Prostate gland (tissue), 2 donors: ENCODE measurements at regions of chr10 and their contacts with region 1.

Region 1: GRCh38 chr10:97612386-97612785 is 20.9 kb downstream of the MORN4 start:
- DNase-seq: peak; percentile 13
- H3K4me3 ChIP-seq: no peak overlapping the region
- H3K27ac ChIP-seq: no peak overlapping the region
- H3K4me1 ChIP-seq: no peaks in the 10 kb centered on the region
- H3K27me3 ChIP-seq: no peaks in the 10 kb centered on the region
- CTCF ChIP-seq: peak in 3 of 4 experiments; percentile 33 to 68 (median 65)
- POLR2A ChIP-seq: no peak

Region 2: DNA sequence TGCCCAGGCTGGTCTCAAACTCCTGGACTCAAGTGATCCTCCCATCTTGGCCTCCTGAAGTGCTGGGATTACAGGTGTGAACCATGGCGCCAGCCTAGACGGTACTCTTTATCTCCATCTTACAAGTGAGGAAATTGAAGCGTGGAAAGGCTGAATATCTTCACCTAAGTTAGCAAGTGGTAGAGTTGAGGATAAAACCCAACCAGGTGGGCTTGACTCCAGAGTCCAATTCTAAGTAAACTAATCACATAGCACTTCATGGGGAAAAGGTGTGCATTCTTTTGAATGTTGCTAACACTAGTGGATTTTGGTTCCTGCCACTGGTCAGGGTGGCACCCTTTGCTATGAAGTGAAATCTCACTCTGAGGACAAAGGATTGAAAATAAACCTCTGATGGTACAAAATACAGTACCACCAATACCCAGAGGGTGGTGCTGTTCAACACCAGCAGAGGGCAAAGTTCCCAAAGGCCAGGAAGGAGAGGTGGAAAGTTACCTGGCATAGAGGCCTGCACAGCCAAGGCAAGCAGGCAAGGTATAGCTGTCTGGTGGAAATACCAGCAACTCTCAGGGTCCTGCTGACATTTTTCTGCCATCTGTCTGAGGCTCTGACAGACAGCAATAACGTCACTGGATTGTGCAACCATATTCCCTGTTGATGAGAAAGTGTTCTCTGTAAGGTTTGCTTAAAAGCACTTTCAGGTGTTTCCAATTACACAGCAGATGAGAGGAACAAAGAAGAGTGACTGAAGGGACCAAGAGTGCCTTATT is 148.8 kb before region 1 on chr10:
- intact Hi-C with region 1: loop called (anchors 5 kb)
- DNase-seq: peak; percentile 55
- H3K4me3 ChIP-seq: no peak overlapping the region
- H3K27ac ChIP-seq: peak overlapping the region in 1 of 2 donors; percentile 9
- H3K4me1 ChIP-seq: peaks cover 4% of the 10 kb centered on the region
- H3K27me3 ChIP-seq: no peaks in the 10 kb centered on the region
- CTCF ChIP-seq: peak; percentile 68 to 90 (median 82)
- POLR2A ChIP-seq: no peak

Region 3: DNA sequence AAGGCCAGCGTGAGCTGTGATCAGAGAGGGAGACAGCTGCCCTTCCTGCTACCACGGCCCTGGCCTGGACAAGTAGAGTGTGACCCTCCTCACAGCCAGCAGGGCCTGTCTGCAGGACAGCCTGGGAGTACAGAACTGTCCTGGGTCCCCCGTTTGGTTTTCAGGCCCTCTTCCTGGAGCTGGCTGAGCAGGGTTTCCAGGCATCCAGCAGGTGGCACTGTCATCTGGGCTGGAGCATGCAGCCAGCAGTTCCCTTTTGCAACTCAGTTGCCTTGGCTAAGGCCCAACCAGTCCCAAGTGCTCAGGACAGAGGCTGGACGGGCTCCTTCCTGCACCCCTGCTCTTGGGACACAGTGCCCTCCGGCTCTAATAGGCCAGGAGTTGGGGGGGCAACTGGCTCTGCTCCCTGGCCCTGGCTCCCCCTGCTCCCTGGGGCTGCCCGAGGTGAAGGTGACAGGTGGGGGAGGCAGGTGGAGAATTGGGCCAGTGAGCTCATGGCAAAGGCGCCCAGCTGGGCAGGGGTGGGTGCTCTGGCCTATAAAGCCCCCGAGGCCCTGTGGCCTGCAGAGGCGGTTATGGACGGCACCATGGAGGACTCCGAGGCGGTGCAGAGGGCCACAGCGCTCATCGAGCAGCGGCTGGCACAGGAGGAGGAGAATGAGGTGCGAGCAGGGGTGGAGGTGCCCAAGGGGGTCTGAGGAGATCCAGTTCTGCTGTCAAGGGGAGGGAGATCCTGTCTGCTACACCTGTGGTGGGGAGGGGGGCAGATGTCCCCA is 40.0 kb before region 1 on chr10 and contains the start of gene ANKRD2:
- intact Hi-C with region 1: loop called (anchors 2 kb)
- DNase-seq: peak; percentile 74
- H3K4me3 ChIP-seq: no peak within 1 kb of the TSS
- H3K27ac ChIP-seq: peak within 1 kb of the TSS; percentile 50 to 55
- H3K4me1 ChIP-seq: no peaks in the 10 kb centered on the region
- H3K27me3 ChIP-seq: no peaks in the 10 kb centered on the region
- CTCF ChIP-seq: peak; percentile 47 to 90 (median 73)
- POLR2A ChIP-seq: no peak
- total RNA-seq, gene ANKRD2: 13.9 TPM in 1 of 2 donors, not detected in the other

Region 4: GRCh38 chr10:97743169-97743943 is 131.0 kb after region 1 on chr10:
- intact Hi-C with region 1: no loop called
- DNase-seq: no peak
- H3K4me3 ChIP-seq: no peak overlapping the region
- H3K27ac ChIP-seq: no peak overlapping the region
- H3K4me1 ChIP-seq: no peaks in the 10 kb centered on the region
- H3K27me3 ChIP-seq: no peaks in the 10 kb centered on the region
- CTCF ChIP-seq: no peak
- POLR2A ChIP-seq: no peak